Left cardiac atrium (tissue), 4 donors: ENCODE measurements at regions of chr4 and their contacts with region 1.

Region 1: GRCh38 chr4:88583631-88584475 is 8.4 kb upstream of the HERC3 start:
- DNase-seq: no peak
- ATAC-seq: peak; percentile 72 to 84

Region 2: GRCh38 chr4:88628759-88629158 is 44.9 kb after region 1 on chr4:
- intact Hi-C with region 1: loop called in 1 of 2 experiments (anchors 5 kb)
- DNase-seq: no peak
- ATAC-seq: no peak

Region 3: GRCh38 chr4:88674979-88675378 is 91.1 kb after region 1 on chr4:
- intact Hi-C with region 1: no loop called
- DNase-seq: no peak
- ATAC-seq: no peak